ENCODE measurements at regions of chr17 and their contacts with region 1.

Region 1: DNA sequence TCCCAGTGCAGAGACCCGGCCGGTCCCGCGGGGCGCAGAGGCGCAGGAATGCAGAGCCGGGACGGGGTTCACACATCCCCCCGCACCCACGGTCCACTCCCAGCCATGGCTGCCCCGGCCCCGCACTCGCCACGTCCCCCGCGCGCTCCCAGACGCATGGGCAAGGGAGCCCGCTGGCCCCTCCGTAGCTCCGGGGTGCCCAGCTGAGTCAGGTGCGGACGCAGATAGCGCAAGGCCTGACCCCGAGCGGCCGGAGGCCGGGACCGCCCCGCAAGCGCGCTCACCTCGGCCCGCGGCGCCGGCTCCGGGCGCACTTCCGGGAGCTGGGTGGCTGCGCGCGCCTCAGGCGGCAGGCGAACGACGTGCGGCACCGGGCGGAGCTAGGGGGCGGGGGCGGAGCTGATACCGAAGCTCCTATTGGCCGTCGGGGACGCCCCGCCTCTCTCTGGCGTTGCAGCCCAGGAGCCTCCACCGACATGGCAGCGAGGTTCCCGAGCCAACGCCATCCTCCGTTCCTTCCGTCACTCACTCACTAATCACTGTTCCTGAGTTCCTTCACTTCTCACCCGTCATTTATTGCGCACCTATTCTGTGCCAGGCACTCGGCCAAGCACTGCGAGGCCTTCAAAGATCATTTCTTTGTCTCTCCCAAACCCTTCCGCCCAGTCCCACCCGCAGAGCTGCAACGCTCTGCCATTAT is at the start of gene ZNF18:
- DNase-seq: peak; percentile 92 to 99 (median 96)

Region 2: GRCh38 chr17:11742886-11743285 is 254.4 kb before region 1 on chr17:
- intact Hi-C with region 1: no loop called
- DNase-seq: peak in 1 of 10 donors; percentile 23

Region 3: DNA sequence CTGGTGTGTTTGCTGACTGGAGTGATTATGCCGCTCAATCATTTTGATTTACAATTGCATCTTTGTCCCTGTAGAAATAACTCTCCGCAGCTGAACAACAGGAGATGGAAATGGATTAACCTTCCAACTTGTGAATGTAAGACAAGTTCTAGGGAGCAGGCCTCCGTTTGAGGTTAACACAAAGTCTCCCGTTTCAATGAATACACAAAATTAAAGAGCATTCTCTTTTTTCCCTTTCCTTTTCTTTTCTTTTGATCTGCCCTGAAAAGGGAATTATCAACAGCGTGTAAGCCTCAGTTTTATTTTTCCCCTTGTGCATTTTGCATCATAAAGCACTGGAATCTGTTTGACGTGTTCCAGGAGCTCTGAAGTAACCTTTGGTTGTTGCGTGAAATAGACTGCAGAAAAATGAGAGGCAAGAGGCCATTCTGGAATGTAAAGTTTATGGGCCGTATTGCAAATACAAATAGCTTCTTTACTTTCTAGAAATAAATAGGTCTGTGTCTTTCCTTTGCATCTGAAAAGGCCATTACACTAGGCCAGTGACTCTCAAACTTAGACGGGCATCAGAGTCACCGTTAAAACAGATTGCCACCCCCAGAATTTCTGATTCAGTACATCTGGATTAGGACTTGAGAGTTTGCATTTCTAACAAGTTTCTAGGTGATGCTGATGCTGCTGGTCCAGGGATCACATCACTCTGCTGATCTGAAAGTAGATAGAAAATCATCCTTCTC is 164.7 kb before region 1 on chr17:
- intact Hi-C with region 1: no loop called
- DNase-seq: no peak

Region 4: DNA sequence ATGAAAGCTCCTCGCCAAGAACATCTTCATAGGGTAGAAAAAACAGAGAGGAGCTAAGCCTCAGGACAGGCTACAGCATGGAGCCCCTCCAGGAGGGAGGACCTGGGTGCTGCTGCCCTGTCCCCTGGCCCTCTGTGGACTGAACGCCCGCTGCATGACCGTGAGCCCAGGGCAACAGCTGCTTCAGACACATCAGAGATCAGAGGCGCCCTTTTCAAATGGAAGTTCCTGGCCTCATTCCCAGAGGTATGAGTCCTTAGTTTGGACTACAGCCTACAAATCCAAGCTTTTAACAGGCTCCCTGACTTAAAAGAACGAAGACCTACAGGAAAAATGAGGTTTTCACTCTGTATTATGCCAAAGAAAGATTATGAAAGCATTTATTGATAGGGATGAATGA is 48.5 kb before region 1 on chr17:
- intact Hi-C with region 1: no loop called
- DNase-seq: peak in 2 of 10 donors; percentile 8 to 13

Region 5: DNA sequence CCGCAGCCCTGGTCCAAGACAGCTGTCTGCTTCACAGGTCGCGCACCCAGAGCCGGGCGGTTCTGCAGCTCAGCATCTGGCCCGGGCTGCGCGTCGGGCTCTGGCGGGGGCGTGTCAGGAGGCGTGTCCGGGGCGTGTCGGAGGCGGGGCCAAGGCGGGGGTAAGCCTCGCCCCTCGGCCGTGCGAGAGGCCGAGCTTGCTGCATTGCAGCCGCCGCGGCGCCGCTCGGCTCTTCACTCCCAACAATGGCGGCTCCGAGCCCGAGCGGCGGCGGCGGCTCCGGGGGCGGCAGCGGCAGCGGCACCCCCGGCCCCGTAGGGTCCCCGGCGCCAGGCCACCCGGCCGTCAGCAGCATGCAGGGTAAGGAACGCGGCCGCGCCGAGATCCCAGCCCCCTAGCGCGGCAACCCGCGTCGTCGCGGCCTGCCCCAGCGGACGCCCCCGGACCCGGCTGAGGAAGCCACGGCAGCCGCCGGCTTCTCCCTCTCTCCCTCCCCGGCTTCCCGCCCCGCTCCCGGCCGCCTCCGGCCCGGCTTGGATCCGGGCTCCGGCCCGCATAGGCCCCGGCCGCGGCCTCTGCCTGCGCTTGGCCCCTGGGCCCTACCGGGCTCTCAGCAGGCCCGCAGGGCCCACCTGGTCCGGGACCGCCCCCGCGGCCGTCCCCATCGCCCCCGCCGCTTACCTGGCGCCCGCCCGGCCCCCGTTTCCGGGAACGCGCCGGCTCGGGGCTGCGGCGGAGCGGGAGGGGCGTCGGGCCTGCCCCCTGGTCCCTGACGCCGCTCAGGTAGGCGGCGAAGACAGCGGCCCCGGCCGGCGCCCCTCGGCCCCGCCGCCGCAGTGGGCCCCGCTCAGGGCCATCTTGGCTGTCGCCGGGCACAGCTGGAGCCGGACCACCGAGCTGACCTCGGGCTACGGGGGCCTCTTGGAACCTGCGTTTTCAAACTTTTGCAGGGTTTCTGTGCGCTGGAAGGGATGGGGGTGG is 23.6 kb after region 1 on chr17 and contains the start of gene MAP2K4:
- intact Hi-C with region 1: loop called (anchors 1 kb)
- DNase-seq: peak; percentile 89 to 99 (median 95)

Region 6: GRCh38 chr17:12070561-12070960 is 73.3 kb after region 1 on chr17:
- intact Hi-C with region 1: loop called (anchors 2 kb)
- DNase-seq: no peak

Region 7: GRCh38 chr17:13017659-13018459 is 1020.6 kb after region 1 on chr17 and contains the start of gene ELAC2:
- intact Hi-C with region 1: loop called (anchors 5 kb)
- DNase-seq: peak; percentile 96 to 100 (median 98)